Left ventricle myocardium superior (tissue), 1 donor: ENCODE measurements at regions of chr20 and their contacts with region 1.

Region 1: DNA sequence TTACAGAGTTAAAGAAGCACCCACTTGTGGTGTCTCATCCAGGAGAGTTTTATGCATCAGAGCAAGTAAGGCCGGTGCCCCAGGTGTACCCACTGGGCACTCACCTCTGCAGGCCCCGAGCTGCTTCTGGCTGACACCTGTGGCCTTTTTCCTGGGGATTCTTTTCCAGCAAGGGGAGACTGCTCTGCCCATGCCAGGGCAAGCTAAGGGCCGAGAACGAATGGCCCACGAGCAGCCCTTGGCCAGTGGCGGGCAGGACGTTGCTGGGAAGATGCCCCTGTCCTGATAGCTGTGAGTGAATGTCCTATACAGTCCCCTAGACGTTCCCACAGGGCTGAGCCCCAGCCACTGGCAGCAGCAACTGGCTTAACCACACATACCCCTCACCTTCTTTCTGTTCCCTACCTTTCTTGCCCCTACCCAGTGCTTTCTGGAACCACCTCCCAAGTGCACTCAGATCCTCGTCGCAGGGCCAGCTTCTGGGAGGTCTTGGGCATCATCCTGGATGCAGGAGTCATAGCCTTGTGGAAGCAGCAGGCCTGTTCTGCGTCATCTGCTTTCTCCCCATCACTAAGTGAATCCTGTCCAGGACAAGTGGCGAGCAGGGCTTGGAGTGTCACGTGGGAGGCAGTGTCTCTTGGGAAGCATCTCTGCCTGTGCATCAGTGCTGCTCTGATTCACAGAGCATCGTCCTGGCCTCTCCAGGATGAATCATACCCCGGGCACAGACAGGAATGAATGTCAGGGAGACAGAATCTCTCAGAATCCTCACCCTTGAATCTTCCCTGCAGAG is 32.5 kb downstream of the SYNDIG1 start:
- DNase-seq: no peak
- ATAC-seq: peak; percentile 1

Region 2: GRCh38 chr20:24432046-24432442 is 69.9 kb before region 1 on chr20:
- intact Hi-C with region 1: no loop called
- DNase-seq: no peak
- ATAC-seq: no peak

Region 3: DNA sequence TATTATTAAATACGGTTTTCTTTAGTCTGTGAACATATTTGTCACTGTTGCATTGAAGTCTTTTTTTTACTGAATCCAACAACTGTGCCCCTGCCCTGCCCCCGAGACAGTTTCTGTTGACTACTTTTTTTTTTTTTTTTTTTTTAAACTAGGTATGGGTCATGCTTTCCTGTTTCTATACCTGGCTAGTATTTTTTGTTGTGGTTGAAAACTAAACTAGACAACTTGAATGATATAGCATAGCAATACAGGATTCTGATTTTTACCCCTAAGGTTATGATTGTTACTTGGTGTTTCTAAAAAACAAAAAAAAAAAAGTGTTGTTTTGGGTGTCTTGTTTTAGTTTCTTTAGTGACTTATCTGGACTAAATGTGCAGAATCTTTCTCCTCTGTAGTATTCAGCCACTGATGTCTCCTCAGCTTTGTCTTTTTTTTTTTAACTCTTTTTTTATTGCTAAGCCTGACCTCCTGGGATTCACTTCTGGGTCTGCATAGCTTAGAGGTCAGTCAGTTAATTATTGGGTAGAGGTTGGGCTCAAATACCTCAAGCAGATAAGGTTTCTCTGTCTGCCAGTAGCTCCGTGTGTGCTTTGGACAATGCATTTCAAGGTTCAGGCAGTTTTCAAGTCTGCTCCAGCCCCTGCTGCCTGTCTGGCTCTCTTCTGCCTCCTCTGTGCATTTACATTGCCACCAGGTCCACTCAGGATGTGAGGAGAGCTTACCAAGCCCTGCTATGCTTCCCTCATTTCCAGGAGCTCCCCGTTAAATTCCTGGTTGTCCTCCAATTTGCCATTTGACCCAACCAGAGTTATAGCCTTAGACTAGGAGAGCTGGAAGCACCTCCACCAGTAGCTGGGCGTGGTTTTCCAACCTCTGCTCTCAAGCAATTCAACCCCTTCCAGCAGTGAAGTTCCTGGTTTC is 58.9 kb after region 1 on chr20:
- intact Hi-C with region 1: loop called (anchors 10 kb)
- DNase-seq: no peak
- ATAC-seq: peak; percentile 23

Region 4: DNA sequence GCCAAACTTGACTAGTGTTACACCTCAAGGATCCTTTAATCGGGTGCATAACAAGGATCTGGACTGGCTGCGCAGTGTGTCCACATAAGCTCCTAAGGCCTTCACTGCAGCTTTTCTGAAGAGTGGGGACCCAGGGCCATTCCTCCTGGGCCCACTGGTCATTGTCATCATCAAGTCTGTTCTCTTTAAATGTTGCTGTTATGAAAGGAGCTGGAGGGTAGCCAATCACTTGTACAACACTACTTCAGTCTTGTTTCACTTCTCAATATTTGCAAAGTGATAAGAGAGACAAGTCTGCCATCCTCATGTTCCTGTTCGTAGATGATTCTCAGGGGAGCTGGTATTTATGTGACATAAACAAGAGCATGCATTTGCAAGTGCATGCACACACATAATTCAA is 117.3 kb after region 1 on chr20:
- intact Hi-C with region 1: loop called (anchors 10 kb)
- DNase-seq: no peak
- ATAC-seq: peak; percentile 69